Activated T-helper 1 cell treated with anti-CD3 and anti-CD28 coated beads, Interleukin-12 subunit alpha, Interleukin-12 subunit beta, Interleukin-2, Interleukin-4 antibody, amounts not matched to agents 30 ng/mL and 10 ng/mL and 1 ng/mL, durations not matched to agents 14 hours and 24 hours and 36 hours (primary cell): ENCODE measurements at regions of chr11 and their contacts with region 1.

Region 1: GRCh38 chr11:134068829-134069425 is at the start of gene JAM3:
- DNase-seq: peak; percentile 97
- H3K4me3 Mint-ChIP-seq: peak within 1 kb of the TSS; percentile 88
- H3K27ac Mint-ChIP-seq: peak within 1 kb of the TSS; percentile 86
- H3K4me1 Mint-ChIP-seq: peaks cover 8% of the 10 kb centered on the region
- H3K27me3 Mint-ChIP-seq: peaks cover 59% of the 10 kb centered on the region
- total RNA-seq, gene JAM3: 3.5 and 3.9 TPM in 2 replicates

Region 2: GRCh38 chr11:133753150-133753549 is 315.8 kb before region 1 on chr11:
- intact Hi-C with region 1: no loop called
- DNase-seq: no peak
- H3K4me3 Mint-ChIP-seq: no peak overlapping the region
- H3K27ac Mint-ChIP-seq: no peak overlapping the region
- H3K4me1 Mint-ChIP-seq: no peaks in the 10 kb centered on the region
- H3K27me3 Mint-ChIP-seq: peaks cover 3% of the 10 kb centered on the region

Region 3: GRCh38 chr11:134033696-134034491 is 35.0 kb before region 1 on chr11:
- intact Hi-C with region 1: loop called (anchors 1 kb)
- DNase-seq: peak; percentile 65
- H3K4me3 Mint-ChIP-seq: peak overlapping the region; percentile 24
- H3K27ac Mint-ChIP-seq: peak overlapping the region; percentile 59
- H3K4me1 Mint-ChIP-seq: peaks cover 55% of the 10 kb centered on the region
- H3K27me3 Mint-ChIP-seq: peaks cover 7% of the 10 kb centered on the region

Region 4: GRCh38 chr11:134139873-134140331 is 71.0 kb after region 1 on chr11:
- intact Hi-C with region 1: loop called (anchors 5 kb)
- DNase-seq: peak; percentile 26
- H3K4me3 Mint-ChIP-seq: no peak overlapping the region
- H3K27ac Mint-ChIP-seq: no peak overlapping the region
- H3K4me1 Mint-ChIP-seq: peaks cover 13% of the 10 kb centered on the region
- H3K27me3 Mint-ChIP-seq: no peaks in the 10 kb centered on the region

Region 5: GRCh38 chr11:134275534-134276395 is 206.8 kb after region 1 on chr11 and contains the start of gene GLB1L3:
- intact Hi-C with region 1: loop called (anchors 1 kb)
- DNase-seq: peak; percentile 81
- H3K4me3 Mint-ChIP-seq: peak within 1 kb of the TSS; percentile 96
- H3K27ac Mint-ChIP-seq: peak within 1 kb of the TSS; percentile 93
- H3K4me1 Mint-ChIP-seq: peaks cover 53% of the 10 kb centered on the region
- H3K27me3 Mint-ChIP-seq: peaks cover 2% of the 10 kb centered on the region
- total RNA-seq, gene GLB1L3: 14.6 and 16.1 TPM in 2 replicates